Activated B cell treated with CpG ODN at 0.5 μM for 24 hours (primary cell): ENCODE measurements at regions of chr2 and their contacts with region 1.

Region 1: GRCh38 chr2:143217512-143218115 is 88.4 kb downstream of the ARHGAP15 start:
- DNase-seq: no peak
- ATAC-seq: no peak
- H3K4me3 Mint-ChIP-seq: no peak overlapping the region
- H3K27ac Mint-ChIP-seq: peak overlapping the region; percentile 38
- H3K4me1 Mint-ChIP-seq: peaks cover 16% of the 10 kb centered on the region
- H3K27me3 Mint-ChIP-seq: no peaks in the 10 kb centered on the region
- CTCF ChIP-seq: no peak

Region 2: DNA sequence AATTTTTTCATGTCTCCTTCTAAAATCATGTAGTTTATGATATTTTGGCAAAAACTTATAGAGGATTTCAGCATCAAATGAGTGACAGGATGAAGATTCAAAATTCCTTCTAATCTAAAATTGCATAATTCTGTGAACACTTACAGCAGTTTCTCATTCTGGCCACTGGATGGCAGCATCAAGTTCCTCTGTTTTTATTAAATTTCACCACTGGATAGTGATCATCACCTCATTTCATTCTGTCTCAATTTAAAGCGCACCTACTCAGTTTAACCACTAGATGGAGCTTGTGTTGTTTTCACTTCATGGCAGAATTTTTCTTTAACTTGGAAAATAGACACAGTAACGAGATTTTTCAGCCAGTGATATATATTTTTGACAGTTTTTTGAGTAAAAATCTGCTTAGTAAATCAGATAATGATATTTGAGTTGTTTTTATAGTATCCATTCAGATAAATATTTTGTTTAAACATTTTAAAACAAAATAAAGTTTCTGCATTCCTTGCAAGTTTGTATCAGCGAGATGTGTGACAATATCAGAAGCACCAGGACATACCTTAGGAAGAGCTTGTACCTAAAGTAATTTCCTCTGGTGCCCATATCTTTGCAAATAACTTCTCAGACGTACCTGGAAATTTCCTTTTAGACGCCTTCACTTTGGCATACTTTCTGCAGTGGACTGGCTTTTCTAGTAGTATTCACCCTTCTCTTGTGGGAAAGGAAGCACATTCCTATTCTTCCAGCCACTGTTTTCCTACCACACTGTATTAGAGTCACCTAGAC is 183.1 kb before region 1 on chr2:
- CTCF ChIA-PET with region 1: interaction called, 8 read pairs
- POLR2A ChIA-PET with region 1: no interaction called
- intact Hi-C with region 1: loop called (anchors 1 kb)
- DNase-seq: no peak
- ATAC-seq: peak; percentile 99
- H3K4me3 Mint-ChIP-seq: no peak overlapping the region
- H3K27ac Mint-ChIP-seq: no peak overlapping the region
- H3K4me1 Mint-ChIP-seq: peaks cover 9% of the 10 kb centered on the region
- H3K27me3 Mint-ChIP-seq: no peaks in the 10 kb centered on the region
- CTCF ChIP-seq: peak; percentile 79

Region 3: GRCh38 chr2:143148011-143148410 is 69.6 kb before region 1 on chr2:
- CTCF ChIA-PET with region 1: no interaction called
- POLR2A ChIA-PET with region 1: no interaction called
- intact Hi-C with region 1: no loop called
- DNase-seq: no peak
- ATAC-seq: no peak
- H3K4me3 Mint-ChIP-seq: no peak overlapping the region
- H3K27ac Mint-ChIP-seq: peak overlapping the region; percentile 68
- H3K4me1 Mint-ChIP-seq: peaks cover 92% of the 10 kb centered on the region
- H3K27me3 Mint-ChIP-seq: no peaks in the 10 kb centered on the region
- CTCF ChIP-seq: no peak

Region 4: DNA sequence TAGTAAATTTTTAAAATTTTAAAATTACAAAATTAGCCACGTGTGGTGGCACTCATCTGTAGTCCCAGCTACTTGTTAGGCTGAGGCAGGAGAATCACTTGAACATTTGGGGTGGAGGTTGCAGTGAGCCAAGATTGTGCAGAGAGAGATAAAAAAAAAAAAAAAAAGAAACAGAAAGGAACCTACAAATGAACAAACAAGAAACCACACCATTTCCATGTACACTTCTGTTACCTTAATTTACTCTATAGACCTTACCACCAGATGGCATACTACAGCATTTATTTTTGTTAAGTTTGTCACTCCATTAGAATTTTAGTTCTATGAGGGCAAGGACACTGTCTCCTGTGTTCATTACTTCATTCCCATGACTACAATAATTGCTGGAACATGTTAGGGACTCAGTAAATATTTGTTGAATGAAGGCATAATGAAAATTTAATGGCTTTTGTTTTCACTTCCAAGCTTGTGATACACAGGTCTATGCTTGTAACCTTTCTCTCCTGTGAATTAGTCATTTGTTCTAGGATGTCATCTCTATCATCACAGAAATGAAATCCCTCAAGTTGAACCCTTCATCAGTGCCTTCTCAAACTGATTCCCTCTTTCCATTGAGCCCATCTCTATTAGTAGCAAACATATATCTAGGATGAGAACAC is 12.4 kb before region 1 on chr2:
- CTCF ChIA-PET with region 1: interaction called, 7 read pairs
- POLR2A ChIA-PET with region 1: no interaction called
- intact Hi-C with region 1: loop called (anchors 2 kb)
- DNase-seq: no peak
- ATAC-seq: peak; percentile 42
- H3K4me3 Mint-ChIP-seq: no peak overlapping the region
- H3K27ac Mint-ChIP-seq: peak overlapping the region; percentile 26
- H3K4me1 Mint-ChIP-seq: peaks cover 28% of the 10 kb centered on the region
- H3K27me3 Mint-ChIP-seq: no peaks in the 10 kb centered on the region
- CTCF ChIP-seq: no peak

Region 5: DNA sequence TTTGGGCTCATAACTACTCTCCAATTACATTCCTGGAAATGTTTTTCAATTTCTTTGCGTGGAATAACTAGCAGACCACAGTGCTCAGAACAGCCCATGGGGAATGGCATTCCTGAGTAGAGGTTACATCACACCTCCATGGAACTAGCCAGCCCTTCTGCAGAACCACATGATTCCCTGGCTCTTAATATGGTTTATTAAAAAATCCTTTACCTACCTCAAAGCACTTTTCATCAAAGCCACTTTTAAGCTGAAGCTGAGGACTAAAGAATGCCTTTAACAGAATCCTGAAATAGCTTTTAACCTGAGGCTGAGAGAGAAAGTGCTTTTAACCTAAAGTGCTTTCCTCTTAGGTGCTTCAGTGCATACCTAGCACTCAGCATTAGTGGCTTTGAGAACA is 287.9 kb after region 1 on chr2:
- CTCF ChIA-PET with region 1: no interaction called
- POLR2A ChIA-PET with region 1: no interaction called
- intact Hi-C with region 1: no loop called
- DNase-seq: no peak
- ATAC-seq: no peak
- H3K4me3 Mint-ChIP-seq: no peak overlapping the region
- H3K27ac Mint-ChIP-seq: no peak overlapping the region
- H3K4me1 Mint-ChIP-seq: peaks cover 9% of the 10 kb centered on the region
- H3K27me3 Mint-ChIP-seq: no peaks in the 10 kb centered on the region
- CTCF ChIP-seq: no peak